ENCODE measurements at regions of chr2 and their contacts with region 1.

Region 1: DNA sequence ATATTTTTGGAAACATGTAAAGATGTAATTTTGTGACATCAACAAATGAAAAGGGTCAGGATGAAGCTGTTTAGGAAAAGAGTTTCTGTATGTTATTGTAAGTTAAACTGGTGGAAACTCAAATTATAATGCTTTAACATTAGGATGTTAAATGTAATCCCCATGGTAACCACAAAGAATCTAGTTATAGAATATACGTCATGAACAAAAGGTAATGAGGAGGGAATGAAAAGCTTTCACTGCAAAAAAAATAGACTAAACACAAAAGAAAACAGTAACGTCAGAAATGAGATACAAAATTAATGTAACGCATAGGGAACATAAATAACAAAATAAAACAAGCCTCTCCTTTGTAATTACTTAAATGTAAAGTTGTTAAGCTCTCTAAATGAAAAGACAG is 873.5 kb upstream of the NRXN1 start:
- DNase-seq: no peak
- H3K4me3 ChIP-seq: no peak overlapping the region
- H3K27ac ChIP-seq: no peak overlapping the region
- H3K4me1 ChIP-seq: no peaks in the 10 kb centered on the region
- H3K27me3 ChIP-seq: no peaks in the 10 kb centered on the region
- CTCF ChIP-seq: no peak
- POLR2A ChIP-seq: no peak

Region 2: GRCh38 chr2:51919395-51919794 is 13.9 kb after region 1 on chr2:
- CTCF ChIA-PET with region 1: no interaction called
- POLR2A ChIA-PET with region 1: no interaction called
- dilution Hi-C with region 1: no loop called
- intact Hi-C with region 1: no loop called
- DNase-seq: no peak
- H3K4me3 ChIP-seq: no peak overlapping the region
- H3K27ac ChIP-seq: no peak overlapping the region
- H3K4me1 ChIP-seq: no peaks in the 10 kb centered on the region
- H3K27me3 ChIP-seq: no peaks in the 10 kb centered on the region
- CTCF ChIP-seq: no peak
- POLR2A ChIP-seq: no peak

Region 3: DNA sequence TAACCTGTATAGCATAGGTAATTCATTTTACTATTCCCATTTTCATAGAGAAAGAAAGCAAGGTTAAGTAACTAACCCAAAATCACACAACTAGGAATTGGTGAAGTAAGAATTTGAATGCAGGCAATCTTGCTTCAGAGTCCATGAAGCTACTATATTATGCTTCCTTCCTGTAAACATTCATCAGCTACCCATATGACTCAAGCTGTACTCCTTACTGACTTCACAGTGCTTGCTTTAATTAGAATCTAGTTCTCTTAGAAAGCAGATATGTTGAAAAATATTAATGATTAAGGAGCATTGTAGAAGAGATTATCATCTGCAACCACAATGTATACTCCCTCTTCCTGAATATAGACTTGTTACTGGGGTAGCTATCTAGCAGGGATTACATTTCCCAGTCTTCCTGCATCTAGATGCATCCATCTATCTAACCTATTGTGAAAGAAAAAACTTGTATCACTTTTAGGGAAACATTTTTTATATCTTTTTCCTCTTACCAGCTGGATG is 900.5 kb after region 1 on chr2:
- CTCF ChIA-PET with region 1: no interaction called
- POLR2A ChIA-PET with region 1: no interaction called
- dilution Hi-C with region 1: no loop called
- intact Hi-C with region 1: loop called (anchors 5 kb)
- DNase-seq: no peak
- H3K4me3 ChIP-seq: no peak overlapping the region
- H3K27ac ChIP-seq: no peak overlapping the region
- H3K4me1 ChIP-seq: no peaks in the 10 kb centered on the region
- H3K27me3 ChIP-seq: no peaks in the 10 kb centered on the region
- CTCF ChIP-seq: no peak
- POLR2A ChIP-seq: no peak

Measured in endothelial cell of umbilical vein (primary cell).